Activated CD4-positive, alpha-beta memory T cell treated with anti-CD3 and anti-CD28 coated beads for 36 hours (primary cell): ENCODE measurements at regions of chr1 and their contacts with region 1.

Region 1: GRCh38 chr1:101288491-101288944 is 51.7 kb downstream of the S1PR1 start:
- DNase-seq: peak; percentile 78
- H3K4me3 Mint-ChIP-seq: no peak overlapping the region
- H3K27ac Mint-ChIP-seq: peak overlapping the region; percentile 66
- H3K4me1 Mint-ChIP-seq: peaks cover 80% of the 10 kb centered on the region
- H3K27me3 Mint-ChIP-seq: no peaks in the 10 kb centered on the region

Region 2: DNA sequence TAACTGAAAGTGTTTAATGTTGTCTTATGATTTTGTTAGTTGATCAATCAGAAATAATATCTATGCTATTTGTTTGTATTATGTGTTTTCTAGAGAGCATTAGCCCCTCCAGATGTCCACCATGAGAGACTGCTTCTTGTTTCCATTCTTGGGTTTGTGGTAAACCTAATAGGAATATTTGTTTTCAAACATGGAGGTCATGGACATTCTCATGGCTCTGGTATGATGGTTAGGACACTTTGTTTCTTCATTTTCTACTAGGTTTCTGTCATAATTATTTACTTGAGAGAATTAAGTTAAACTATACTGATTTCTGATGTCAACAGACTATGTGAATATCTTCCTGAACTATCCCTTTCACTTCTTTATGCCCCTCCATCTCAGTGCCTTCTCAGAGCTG is 376.5 kb before region 1 on chr1:
- CTCF ChIA-PET with region 1: interaction called, 12 read pairs
- POLR2A ChIA-PET with region 1: interaction called, 3 read pairs
- intact Hi-C with region 1: no loop called
- DNase-seq: no peak
- H3K4me3 Mint-ChIP-seq: no peak overlapping the region
- H3K27ac Mint-ChIP-seq: no peak overlapping the region
- H3K4me1 Mint-ChIP-seq: peaks cover 37% of the 10 kb centered on the region
- H3K27me3 Mint-ChIP-seq: no peaks in the 10 kb centered on the region

Region 3: GRCh38 chr1:101013776-101014175 is 274.7 kb before region 1 on chr1:
- CTCF ChIA-PET with region 1: interaction called, 12 read pairs
- POLR2A ChIA-PET with region 1: interaction called, 3 read pairs
- intact Hi-C with region 1: no loop called
- DNase-seq: no peak
- H3K4me3 Mint-ChIP-seq: no peak overlapping the region
- H3K27ac Mint-ChIP-seq: no peak overlapping the region
- H3K4me1 Mint-ChIP-seq: peaks cover 5% of the 10 kb centered on the region
- H3K27me3 Mint-ChIP-seq: no peaks in the 10 kb centered on the region

Region 4: GRCh38 chr1:101136739-101137138 is 151.8 kb before region 1 on chr1:
- CTCF ChIA-PET with region 1: interaction called, 63 read pairs
- POLR2A ChIA-PET with region 1: interaction called, 5 read pairs
- intact Hi-C with region 1: loop called (anchors 1 kb)
- DNase-seq: peak; percentile 31
- H3K4me3 Mint-ChIP-seq: peak overlapping the region; percentile 14
- H3K27ac Mint-ChIP-seq: peak overlapping the region; percentile 79
- H3K4me1 Mint-ChIP-seq: peaks cover 60% of the 10 kb centered on the region
- H3K27me3 Mint-ChIP-seq: no peaks in the 10 kb centered on the region

Region 5: DNA sequence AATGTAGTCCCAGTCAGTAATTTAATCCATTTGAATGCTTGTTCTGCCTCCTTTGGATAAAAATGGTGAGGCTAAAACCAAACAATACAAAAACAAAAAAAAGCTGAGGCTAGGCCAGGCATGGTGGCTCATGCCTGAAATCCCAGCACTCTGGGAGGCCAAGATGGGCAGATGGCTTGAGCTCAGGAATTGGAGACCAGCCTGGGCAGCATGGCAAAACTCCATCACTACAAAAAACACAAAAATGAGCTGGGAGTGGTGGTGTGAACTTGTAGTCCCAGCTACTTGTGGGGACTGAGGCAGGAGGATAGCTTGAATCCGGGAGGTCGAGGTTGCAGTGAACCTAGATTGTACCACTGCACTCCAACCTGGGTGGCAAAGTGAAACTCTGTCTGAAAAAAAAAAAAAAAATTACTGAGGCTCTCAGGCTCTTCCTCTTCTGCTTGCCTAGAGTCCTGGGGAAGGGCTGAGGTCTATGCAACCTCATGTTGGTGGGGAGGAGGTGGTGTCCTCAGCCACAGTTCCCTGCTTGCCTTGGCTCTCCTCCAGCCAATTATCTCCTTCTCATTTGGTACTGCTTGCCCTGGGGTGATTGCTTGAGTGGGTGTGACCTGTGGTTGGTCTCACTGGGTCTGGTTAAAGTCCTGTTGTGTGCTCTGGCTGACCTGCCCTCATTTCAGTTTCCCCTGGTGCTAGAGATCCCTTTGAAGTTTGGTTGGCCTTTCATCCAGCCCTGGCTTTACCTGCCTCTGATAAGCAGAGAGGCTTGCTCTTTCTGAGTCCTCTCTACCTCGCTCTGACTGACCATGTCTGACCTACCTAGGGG is 30.8 kb before region 1 on chr1:
- CTCF ChIA-PET with region 1: interaction called, 15 read pairs
- POLR2A ChIA-PET with region 1: interaction called, 3 read pairs
- intact Hi-C with region 1: loop called (anchors 1 kb)
- DNase-seq: peak; percentile 49
- H3K4me3 Mint-ChIP-seq: no peak overlapping the region
- H3K27ac Mint-ChIP-seq: peak overlapping the region; percentile 67
- H3K4me1 Mint-ChIP-seq: peaks cover 66% of the 10 kb centered on the region
- H3K27me3 Mint-ChIP-seq: no peaks in the 10 kb centered on the region

Region 6: GRCh38 chr1:101357444-101357986 is 69.0 kb after region 1 on chr1:
- CTCF ChIA-PET with region 1: interaction called, 11 read pairs
- POLR2A ChIA-PET with region 1: no interaction called
- intact Hi-C with region 1: loop called (anchors 1 kb)
- DNase-seq: peak; percentile 73
- H3K4me3 Mint-ChIP-seq: no peak overlapping the region
- H3K27ac Mint-ChIP-seq: peak overlapping the region; percentile 36
- H3K4me1 Mint-ChIP-seq: peaks cover 8% of the 10 kb centered on the region
- H3K27me3 Mint-ChIP-seq: no peaks in the 10 kb centered on the region

Region 7: DNA sequence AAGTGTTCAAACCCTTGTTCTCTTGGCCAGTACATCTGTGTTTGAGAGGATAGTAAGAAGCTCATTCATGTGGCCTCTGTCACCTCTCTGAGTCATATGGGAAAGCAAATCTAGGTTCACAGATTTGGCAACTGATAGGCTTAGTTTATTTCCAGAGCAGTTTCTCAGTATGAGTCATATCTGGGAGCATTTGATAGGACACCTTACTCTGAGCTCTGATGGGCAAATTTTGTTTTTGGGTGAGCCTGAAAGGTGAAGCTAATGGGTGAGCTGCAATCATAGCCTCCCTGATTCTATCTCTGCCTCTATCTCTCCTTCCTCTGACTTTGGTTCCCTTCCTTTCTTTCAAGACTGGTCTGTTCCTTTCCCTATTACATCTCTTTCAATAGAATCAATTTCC is 82.7 kb after region 1 on chr1:
- CTCF ChIA-PET with region 1: no interaction called
- POLR2A ChIA-PET with region 1: no interaction called
- intact Hi-C with region 1: no loop called
- DNase-seq: peak; percentile 17
- H3K4me3 Mint-ChIP-seq: no peak overlapping the region
- H3K27ac Mint-ChIP-seq: no peak overlapping the region
- H3K4me1 Mint-ChIP-seq: peaks cover 11% of the 10 kb centered on the region
- H3K27me3 Mint-ChIP-seq: no peaks in the 10 kb centered on the region